MCF 10A (cell line): ENCODE measurements at regions of chr16 and their contacts with region 1.

Region 1: GRCh38 chr16:30091474-30092372 is at the start of gene TBX6:
- DNase-seq: peak; percentile 89
- H3K4me3 Mint-ChIP-seq: peak within 1 kb of the TSS; percentile 79
- H3K27ac Mint-ChIP-seq: peak within 1 kb of the TSS; percentile 57
- H3K4me1 Mint-ChIP-seq: peaks cover 37% of the 10 kb centered on the region
- H3K27me3 Mint-ChIP-seq: no peaks in the 10 kb centered on the region
- CTCF ChIP-seq: peak; percentile 74
- total RNA-seq, gene TBX6: 0.16 and 0.47 TPM in 2 replicates

Region 2: DNA sequence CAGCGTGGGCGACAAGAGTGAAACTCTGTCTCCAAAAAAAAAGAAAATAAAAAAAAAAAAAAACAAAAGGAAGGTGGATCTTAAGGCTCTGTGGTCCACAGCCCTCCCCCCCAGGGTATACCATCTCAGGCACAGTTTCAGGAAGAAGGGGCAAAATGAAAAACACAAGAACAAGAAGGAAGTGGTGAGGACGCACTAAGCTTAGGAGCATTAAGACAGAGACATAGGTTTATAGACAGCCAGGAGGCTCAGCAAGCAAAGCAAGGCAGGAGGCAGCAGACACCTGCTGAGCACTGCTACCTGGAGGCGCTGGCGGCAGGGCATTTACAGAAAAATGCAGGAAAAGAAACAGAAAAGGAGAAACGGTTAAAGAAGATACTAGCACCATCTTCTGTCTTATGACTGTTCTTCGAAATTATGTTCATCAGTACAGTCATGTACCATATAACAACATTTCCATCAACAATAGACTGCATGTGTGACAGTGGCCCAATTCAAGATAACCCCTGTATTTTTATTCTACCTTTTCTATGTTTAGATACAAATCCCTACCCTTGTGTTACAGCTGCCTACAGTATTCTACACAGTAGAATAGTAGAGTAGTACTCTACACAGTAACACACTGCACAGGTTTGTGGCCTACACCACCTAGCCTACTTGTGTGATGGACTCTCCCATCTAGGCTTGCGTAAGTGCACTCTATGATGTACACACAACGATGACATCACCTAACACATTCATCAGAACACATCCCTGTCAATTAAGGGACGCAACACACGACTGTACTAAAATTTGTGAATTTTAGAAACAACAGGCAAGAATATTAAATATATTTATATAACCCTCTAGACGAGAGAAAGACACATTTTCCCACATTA is 1942.5 kb before region 1 on chr16:
- CTCF ChIA-PET with region 1: no interaction called
- POLR2A ChIA-PET with region 1: no interaction called
- intact Hi-C with region 1: no loop called
- DNase-seq: peak; percentile 39
- H3K4me3 Mint-ChIP-seq: no peak overlapping the region
- H3K27ac Mint-ChIP-seq: no peak overlapping the region
- H3K4me1 Mint-ChIP-seq: no peaks in the 10 kb centered on the region
- H3K27me3 Mint-ChIP-seq: no peaks in the 10 kb centered on the region
- CTCF ChIP-seq: no peak

Region 3: DNA sequence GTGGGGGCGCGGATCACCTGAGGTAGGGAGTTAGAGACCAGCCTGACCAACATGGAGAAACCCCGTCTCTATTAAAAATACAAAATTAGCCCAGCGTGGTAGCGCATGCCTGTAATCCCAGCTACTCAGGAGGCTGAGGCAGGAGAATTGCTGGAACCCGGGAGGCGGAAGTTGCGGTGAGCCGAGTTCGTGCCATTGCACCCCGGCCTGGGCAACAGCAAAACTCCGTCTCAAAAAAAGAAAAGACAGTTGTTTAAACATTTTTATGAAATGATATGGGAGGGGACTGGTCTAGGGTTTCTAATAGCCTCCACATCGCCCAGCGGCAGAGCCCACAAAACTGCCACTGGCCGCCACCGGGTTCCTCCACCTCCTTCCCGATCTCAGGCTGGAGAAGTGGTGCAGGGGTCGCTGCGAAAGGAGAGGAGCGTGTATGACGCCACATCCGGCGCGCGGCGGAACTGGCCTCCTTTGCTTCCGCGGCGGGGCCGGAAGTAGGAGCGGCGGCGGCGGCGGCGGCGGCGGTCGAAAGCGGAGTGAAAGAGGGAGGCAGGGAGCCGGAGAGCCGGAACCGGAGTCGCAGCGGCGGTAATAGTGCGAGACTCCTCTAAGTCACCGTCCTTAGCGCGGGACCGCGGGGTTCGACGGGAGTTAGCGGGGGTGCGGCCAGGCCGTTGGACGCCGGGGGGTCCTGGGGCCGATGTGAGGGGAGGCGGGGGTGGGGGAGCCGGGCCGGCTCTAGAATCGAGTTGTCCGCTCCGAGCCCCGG is 16.0 kb before region 1 on chr16 and contains the start of gene PPP4C:
- CTCF ChIA-PET with region 1: interaction called, 24 read pairs
- POLR2A ChIA-PET with region 1: interaction called, 50 read pairs
- intact Hi-C with region 1: no loop called
- DNase-seq: peak; percentile 88
- H3K4me3 Mint-ChIP-seq: peak within 1 kb of the TSS; percentile 84
- H3K27ac Mint-ChIP-seq: peak within 1 kb of the TSS; percentile 97
- H3K4me1 Mint-ChIP-seq: peaks cover 20% of the 10 kb centered on the region
- H3K27me3 Mint-ChIP-seq: no peaks in the 10 kb centered on the region
- CTCF ChIP-seq: no peak
- total RNA-seq, gene PPP4C: 93.2 and 99.7 TPM in 2 replicates

Region 4: GRCh38 chr16:30104494-30104968 is 12.8 kb after region 1 on chr16:
- CTCF ChIA-PET with region 1: interaction called, 14 read pairs
- POLR2A ChIA-PET with region 1: no interaction called
- intact Hi-C with region 1: no loop called
- DNase-seq: no peak
- H3K4me3 Mint-ChIP-seq: no peak overlapping the region
- H3K27ac Mint-ChIP-seq: no peak overlapping the region
- H3K4me1 Mint-ChIP-seq: peaks cover 6% of the 10 kb centered on the region
- H3K27me3 Mint-ChIP-seq: no peaks in the 10 kb centered on the region
- CTCF ChIP-seq: no peak

Region 5: DNA sequence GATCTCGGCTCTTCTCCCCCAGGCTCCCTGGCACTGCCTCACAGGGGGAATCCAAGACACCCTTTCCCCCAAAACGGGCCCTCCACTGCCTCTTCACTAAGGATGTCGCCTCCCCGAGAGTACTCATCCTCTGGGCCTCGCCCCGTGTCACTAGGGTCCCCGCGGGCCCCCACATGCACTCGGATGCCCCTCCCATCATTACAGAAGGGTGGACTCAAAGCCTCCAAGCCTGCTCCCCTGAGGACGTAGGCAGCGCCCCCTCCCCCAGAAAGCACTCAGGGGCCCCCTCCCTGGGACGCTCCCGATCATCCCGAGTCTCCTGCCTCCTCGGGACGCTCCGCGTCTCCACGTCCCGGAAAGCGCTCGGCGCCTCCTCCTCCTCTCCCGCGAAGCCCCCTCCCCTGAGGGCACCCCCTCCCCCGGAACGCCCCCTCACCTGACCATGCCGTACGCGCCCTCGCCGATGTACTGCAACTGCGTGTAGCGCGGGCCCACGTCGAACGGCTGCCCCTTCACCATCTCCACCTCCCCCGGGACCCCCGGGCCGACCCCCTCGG is 31.0 kb after region 1 on chr16:
- CTCF ChIA-PET with region 1: interaction called, 3 read pairs
- POLR2A ChIA-PET with region 1: interaction called, 21 read pairs
- intact Hi-C with region 1: no loop called
- DNase-seq: no peak
- H3K4me3 Mint-ChIP-seq: peak overlapping the region; percentile 73
- H3K27ac Mint-ChIP-seq: peak overlapping the region; percentile 63
- H3K4me1 Mint-ChIP-seq: peaks cover 10% of the 10 kb centered on the region
- H3K27me3 Mint-ChIP-seq: no peaks in the 10 kb centered on the region
- CTCF ChIP-seq: no peak